Activated CD8-positive, alpha-beta T cell treated with anti-CD3 and anti-CD28 coated beads for 36 hours (primary cell): ENCODE measurements at regions of chr10 and their contacts with region 1.

Region 1: DNA sequence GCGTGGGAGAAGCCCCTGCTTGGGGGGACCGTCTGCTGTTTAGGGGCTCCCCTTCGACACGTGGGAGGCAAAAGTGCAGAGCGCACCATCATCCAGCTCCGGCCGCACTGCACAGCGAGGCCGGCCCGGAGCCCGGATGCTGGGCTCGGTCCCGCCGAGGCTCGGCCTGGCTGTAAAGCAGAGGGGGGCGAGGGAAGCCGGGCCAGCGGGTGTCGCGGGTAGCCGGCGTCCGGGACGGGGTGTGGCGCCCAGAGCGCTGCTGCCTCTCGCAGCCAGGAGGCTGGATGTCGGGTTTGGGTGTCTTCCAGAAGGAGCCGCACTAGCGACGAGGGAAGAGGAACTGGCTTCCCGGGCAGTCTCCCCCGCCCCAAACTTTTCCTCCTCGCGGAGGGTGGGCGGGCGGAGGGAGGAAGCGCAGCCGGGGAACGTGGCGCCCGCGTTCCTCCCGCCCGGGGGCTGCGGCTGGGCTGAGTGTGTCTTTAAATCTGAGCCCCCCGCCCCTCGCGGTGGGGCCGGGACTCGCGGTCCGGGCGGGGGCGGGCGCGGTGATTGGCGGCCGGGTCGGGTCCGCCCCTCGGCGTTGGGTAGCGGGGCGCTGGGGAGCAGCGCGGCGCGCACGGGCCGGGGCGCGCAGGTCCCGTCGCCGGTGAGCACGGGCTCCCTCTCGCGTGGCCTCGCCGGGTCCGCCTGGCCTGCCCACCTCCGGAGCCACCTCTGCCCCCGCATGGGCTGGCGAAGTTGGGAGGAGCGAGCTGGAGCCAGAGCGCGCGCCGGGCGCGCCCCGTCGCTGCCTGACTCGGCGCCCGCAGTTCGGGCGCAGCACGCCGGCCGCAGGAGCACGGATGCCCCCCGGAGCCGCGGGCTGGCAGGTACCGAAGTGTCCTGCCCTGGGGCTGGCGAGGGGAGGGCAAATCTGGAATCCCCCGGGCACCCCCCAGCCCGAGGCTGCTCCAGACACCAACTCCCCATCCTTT is at the start of gene PALD1:
- DNase-seq: peak; percentile 68
- ATAC-seq: peak; percentile 55
- H3K4me3 Mint-ChIP-seq: peak within 1 kb of the TSS; percentile 72
- H3K27ac Mint-ChIP-seq: peak within 1 kb of the TSS; percentile 55
- H3K4me1 Mint-ChIP-seq: peaks cover 48% of the 10 kb centered on the region
- H3K27me3 Mint-ChIP-seq: peaks cover 17% of the 10 kb centered on the region
- CTCF ChIP-seq: no peak
- total RNA-seq, gene PALD1: 6.6 to 6.8 TPM

Region 2: DNA sequence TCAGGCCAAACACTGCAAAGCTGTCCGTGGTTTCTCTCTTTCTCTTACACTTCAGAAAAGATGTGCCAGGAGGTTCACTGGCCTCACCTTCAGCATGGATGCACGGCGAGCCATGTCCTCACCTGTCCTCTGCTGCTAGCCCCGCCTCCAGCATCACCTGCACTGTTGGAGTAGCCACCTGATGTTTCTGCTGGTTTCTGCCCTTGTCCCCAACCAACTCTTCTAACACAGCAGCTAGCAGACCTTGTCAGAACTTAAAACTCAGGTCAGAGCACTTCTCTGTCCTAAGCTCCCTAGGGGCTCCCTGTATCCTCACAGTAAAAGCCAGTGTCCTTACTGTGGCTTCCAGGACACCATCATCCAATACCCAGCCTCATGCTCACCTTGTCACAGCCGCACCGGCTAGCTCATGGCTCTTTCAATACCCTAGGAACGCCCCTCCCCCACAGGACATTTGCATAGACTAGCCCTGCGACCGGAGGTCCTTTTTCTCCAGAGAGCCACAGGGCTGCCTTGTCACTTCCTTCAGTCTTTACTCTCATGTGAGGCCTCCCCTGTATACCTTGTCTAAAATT is 15.3 kb after region 1 on chr10:
- CTCF ChIA-PET with region 1: interaction called, 3 read pairs
- POLR2A ChIA-PET with region 1: interaction called, 23 read pairs
- intact Hi-C with region 1: no loop called
- DNase-seq: peak; percentile 63
- ATAC-seq: peak; percentile 35
- H3K4me3 Mint-ChIP-seq: no peak overlapping the region
- H3K27ac Mint-ChIP-seq: peak overlapping the region; percentile 37
- H3K4me1 Mint-ChIP-seq: peaks cover 22% of the 10 kb centered on the region
- H3K27me3 Mint-ChIP-seq: peaks cover 11% of the 10 kb centered on the region
- CTCF ChIP-seq: no peak

Region 3: DNA sequence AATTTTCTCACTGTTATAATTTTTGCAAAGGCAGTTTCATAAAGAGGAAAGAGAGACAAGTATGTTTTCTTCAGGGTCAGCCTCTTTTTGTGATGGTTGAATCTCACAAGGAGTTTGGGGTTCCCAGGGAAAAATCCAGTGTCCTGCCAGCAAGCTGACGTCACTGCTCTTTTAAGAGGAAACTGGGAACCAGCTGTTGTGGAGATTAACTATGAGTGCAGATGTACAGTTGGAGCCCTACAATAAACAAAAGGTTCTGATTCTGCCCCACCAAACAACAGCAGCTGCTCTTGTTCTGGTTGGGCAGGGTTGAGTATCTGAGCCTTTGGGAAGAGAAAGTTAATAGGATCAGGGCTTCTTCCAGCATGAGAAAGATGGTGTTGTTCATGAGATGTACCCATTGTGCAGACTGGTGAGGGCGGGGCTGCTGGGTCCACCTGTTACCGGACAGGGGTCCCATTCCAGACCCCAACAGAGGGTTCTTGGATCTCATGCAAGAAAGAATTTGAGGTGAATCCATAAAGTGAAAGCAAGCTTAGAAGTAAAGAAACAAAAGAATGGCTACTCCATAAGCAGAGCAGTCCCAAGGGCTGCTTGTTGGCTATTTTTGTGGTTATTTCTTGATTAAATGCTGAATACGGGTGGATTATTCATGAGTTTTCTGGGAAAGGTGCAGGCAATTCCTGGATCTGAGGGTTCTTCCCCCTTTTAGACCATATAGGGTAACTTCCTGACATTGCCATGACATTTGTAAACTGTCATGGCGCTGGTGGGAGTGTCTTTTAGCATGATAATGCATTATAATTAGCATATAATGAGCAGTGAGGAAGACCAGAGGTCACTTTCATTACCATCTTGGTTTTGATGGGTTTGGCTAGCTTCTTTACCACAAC is 111.5 kb after region 1 on chr10:
- CTCF ChIA-PET with region 1: no interaction called
- POLR2A ChIA-PET with region 1: no interaction called
- intact Hi-C with region 1: no loop called
- DNase-seq: no peak
- ATAC-seq: no peak
- H3K4me3 Mint-ChIP-seq: no peak overlapping the region
- H3K27ac Mint-ChIP-seq: no peak overlapping the region
- H3K4me1 Mint-ChIP-seq: peaks cover 67% of the 10 kb centered on the region
- H3K27me3 Mint-ChIP-seq: no peaks in the 10 kb centered on the region
- CTCF ChIP-seq: no peak